H1 (cell line): ENCODE measurements at regions of chr3 and their contacts with region 1.

Region 1: GRCh38 chr3:101827211-101828174 is 21.8 kb upstream of the NFKBIZ start:
- DNase-seq: peak in 1 of 2 experiments; percentile 76
- H3K4me3 ChIP-seq: peak overlapping the region; percentile 52 to 70 (median 64)
- H3K27ac ChIP-seq: peak overlapping the region; percentile 64; the same call in 1 of the 2 replicates
- H3K4me1 ChIP-seq: peaks cover 0 to 8% (median 4%) of the 10 kb centered on the region in 4 experiments; a peak in 5 of 7 replicates
- H3K27me3 ChIP-seq: no peaks in the 10 kb centered on the region
- CTCF ChIP-seq: no peak
- EP300 ChIP-seq: no peak
- POLR2A ChIP-seq: peak in 1 of 2 experiments; percentile 87; a peak in 2 of 3 replicates
- RAD21 ChIP-seq: peak in 1 of 2 experiments; percentile 20; a peak in 3 of 4 replicates

Region 2: DNA sequence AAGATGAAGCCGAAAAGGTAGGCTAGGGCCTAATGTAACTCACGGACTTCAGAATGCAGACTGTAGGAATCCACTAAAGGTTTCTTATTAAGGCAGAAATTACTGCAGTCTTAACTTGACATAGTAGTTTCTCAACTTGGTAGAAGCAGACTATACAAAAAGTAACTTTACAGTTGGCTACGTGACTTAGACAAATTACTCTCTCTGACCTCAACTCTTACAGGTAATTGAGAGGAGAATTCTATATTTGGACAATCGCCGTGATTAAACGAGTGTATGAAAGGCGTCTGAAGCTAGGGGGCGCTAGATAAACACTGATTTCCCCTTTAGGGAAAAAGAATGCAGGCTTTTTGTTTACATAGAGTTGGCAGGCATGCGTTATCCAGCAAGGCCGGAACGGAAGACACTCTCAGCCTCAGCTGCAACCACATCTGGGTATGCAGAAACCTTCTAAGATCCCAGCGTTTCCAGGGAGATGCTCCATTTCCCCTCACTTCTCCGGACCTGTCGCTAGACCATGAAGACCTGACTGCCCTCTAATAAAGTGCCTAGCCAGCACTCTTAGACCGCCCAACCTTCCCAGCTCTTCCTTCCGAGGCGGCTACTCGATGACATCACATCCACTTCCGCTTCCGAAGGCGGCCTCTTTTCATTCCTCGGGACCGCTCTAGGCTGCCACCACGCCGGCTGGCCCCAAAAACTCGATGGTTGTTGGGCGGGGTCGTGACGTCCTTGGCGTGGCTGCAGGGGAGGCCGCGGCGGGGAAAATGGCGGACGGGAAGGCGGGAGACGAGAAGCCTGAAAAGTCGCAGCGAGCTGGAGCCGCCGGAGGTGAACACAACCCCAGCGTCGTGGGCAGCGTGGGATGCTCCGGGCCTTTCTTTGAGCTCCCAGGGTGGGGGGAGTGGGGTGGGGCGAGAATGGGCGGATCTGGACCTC is 253.8 kb before region 1 on chr3 and contains the start of gene PCNP:
- CTCF ChIA-PET with region 1: no interaction called
- POLR2A ChIA-PET with region 1: no interaction called
- DNase-seq: peak; percentile 90 to 98
- H3K4me3 ChIP-seq: peak within 1 kb of the TSS; percentile 82 to 98 (median 91)
- H3K27ac ChIP-seq: peak within 1 kb of the TSS; percentile 96
- H3K4me1 ChIP-seq: peaks cover 0 to 3% (median 0%) of the 10 kb centered on the region in 4 experiments; a peak in 2 of 7 replicates
- H3K27me3 ChIP-seq: no peaks in the 10 kb centered on the region; a peak in 1 of 7 replicates
- CTCF ChIP-seq: peak in 2 of 3 experiments; percentile 58 to 80; a peak in 3 of 4 replicates
- EP300 ChIP-seq: peak in 1 of 2 experiments; percentile 53; a peak in 1 of 3 replicates
- POLR2A ChIP-seq: peak; percentile 85 to 93
- RAD21 ChIP-seq: peak; percentile 68 to 73
- total RNA-seq, gene PCNP: 188 and 192 TPM in 2 replicates

Region 3: GRCh38 chr3:101842245-101842934 is 14.9 kb after region 1 on chr3:
- CTCF ChIA-PET with region 1: interaction called, 4 read pairs
- POLR2A ChIA-PET with region 1: interaction called, 22 read pairs
- DNase-seq: peak; percentile 52 to 87
- H3K4me3 ChIP-seq: no peak overlapping the region; a peak in 1 of 8 replicates
- H3K27ac ChIP-seq: peak overlapping the region; percentile 83
- H3K4me1 ChIP-seq: peaks cover 3 to 13% (median 8%) of the 10 kb centered on the region in 4 experiments; a peak in 5 of 7 replicates
- H3K27me3 ChIP-seq: no peaks in the 10 kb centered on the region
- CTCF ChIP-seq: no peak
- EP300 ChIP-seq: peak in 1 of 2 experiments; percentile 90; a peak in 1 of 3 replicates
- POLR2A ChIP-seq: no peak
- RAD21 ChIP-seq: no peak